Naive thymus-derived CD4-positive, alpha-beta T cell (primary cell): ENCODE measurements at regions of chr2 and their contacts with region 1.

Region 1: GRCh38 chr2:10122386-10123280 is at the start of gene RRM2:
- DNase-seq: peak; percentile 74 to 94 (median 84)
- ATAC-seq: peak; percentile 82
- H3K4me3 ChIP-seq: peak within 1 kb of the TSS; percentile 55
- H3K4me3 Mint-ChIP-seq: peak within 1 kb of the TSS; percentile 80 to 99 (median 98)
- H3K27ac ChIP-seq: peak within 1 kb of the TSS; percentile 34
- H3K27ac Mint-ChIP-seq: peak within 1 kb of the TSS in 6 of 9 donors; percentile 17 to 99 (median 69)
- H3K4me1 ChIP-seq: peaks cover 24 to 29% of the 10 kb centered on the region in 2 donors
- H3K4me1 Mint-ChIP-seq: peaks cover 21 to 76% (median 41%) of the 10 kb centered on the region in 7 donors
- H3K27me3 ChIP-seq: peaks cover 0 to 7% of the 10 kb centered on the region in 2 donors
- H3K27me3 Mint-ChIP-seq: peaks cover 0 to 24% (median 10%) of the 10 kb centered on the region in 5 donors
- total RNA-seq, gene RRM2: 0.13 to 330 (median 0.51) TPM

Region 2: DNA sequence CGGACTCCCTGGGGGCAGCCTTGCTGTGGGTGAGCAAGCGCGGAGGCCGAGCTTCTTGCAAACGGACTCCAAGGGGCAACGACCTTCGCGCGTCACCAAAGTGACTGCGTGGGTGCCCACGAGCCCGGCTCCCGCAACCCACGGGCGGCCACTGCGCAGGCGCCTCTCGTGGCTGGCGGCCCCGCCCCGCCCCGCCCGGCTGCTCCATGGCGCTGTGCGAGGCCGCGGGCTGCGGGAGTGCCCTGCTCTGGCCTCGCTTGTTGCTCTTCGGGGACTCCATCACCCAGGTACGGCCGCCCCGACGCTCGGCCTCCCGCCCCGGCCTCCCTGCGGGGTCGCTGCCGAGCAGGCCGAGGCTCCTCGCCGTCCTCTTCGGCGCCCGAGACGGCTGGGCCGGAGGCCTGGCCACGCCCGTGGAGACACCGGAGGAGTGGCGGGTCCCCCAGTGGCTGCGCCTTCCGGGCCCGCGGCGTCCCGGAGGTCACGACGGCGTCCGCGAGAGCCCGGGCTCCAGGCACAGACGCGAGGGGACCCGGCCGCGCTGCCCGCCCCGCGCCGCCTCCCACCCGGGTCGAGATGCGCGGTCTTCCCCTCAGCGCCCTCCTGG is 648.2 kb before region 1 on chr2 and contains the start of gene IAH1:
- CTCF ChIA-PET with region 1: no interaction called
- POLR2A ChIA-PET with region 1: no interaction called
- intact Hi-C with region 1: loop called in 1 of 2 experiments (anchors 5 kb)
- DNase-seq: peak in 8 of 9 donors; percentile 66 to 81 (median 78)
- ATAC-seq: peak; percentile 89
- H3K4me3 ChIP-seq: peak within 1 kb of the TSS; percentile 82
- H3K4me3 Mint-ChIP-seq: peak within 1 kb of the TSS; percentile 81 to 89 (median 84)
- H3K27ac ChIP-seq: peak within 1 kb of the TSS; percentile 95
- H3K27ac Mint-ChIP-seq: peak within 1 kb of the TSS; percentile 83 to 95 (median 88)
- H3K4me1 ChIP-seq: peaks cover 11 to 21% of the 10 kb centered on the region in 2 donors
- H3K4me1 Mint-ChIP-seq: peaks cover 20 to 53% (median 45%) of the 10 kb centered on the region in 7 donors
- H3K27me3 ChIP-seq: no peaks in the 10 kb centered on the region
- H3K27me3 Mint-ChIP-seq: no peaks in the 10 kb centered on the region
- total RNA-seq, gene IAH1: 43.9 to 62.7 (median 49.7) TPM

Region 3: DNA sequence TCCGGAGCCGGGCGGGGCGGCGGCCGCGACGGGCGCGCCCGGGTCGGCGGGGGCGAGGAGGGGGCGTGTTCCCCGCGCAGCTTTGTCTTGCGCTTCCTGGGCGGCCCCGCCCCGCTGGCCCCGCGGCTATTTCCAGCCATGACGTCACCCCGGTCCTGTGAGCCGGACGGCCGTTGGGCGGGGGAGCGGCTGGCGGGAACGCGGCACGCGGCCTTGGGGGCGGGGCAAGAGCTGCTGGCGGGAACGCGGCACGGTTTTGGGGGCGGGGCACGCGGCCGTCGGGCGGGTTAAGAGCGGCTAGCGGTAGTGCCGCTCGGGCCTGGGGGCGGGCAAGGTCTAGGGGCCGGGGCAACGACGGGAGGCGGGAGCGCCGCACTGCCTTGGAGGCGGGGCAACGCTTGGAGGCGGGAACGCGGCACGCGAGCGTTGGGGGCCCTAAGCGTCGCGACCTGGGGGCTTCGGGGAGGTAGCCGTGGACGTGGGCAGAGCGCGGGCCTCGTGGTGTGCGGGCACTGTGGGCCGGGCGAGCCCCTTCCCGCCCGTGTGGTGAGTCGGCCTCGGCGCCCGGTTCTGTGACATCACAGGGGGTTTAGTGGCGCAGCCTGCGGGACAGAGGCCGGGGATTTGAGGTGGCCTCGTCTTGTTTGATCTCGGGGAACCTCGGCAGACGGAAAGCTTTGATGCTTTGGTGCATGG is 78.6 kb before region 1 on chr2:
- CTCF ChIA-PET with region 1: no interaction called
- POLR2A ChIA-PET with region 1: no interaction called
- intact Hi-C with region 1: loop called (anchors 1 kb)
- DNase-seq: peak; percentile 79 to 93 (median 89)
- ATAC-seq: peak; percentile 73
- H3K4me3 ChIP-seq: peak overlapping the region; percentile 48
- H3K4me3 Mint-ChIP-seq: peak overlapping the region; percentile 76 to 89 (median 84)
- H3K27ac ChIP-seq: peak overlapping the region; percentile 76
- H3K27ac Mint-ChIP-seq: peak overlapping the region; percentile 82 to 95 (median 88)
- H3K4me1 ChIP-seq: peaks cover 6% of the 10 kb centered on the region in 2 donors
- H3K4me1 Mint-ChIP-seq: peaks cover 14 to 35% (median 29%) of the 10 kb centered on the region in 7 donors
- H3K27me3 ChIP-seq: no peaks in the 10 kb centered on the region
- H3K27me3 Mint-ChIP-seq: peaks cover 0 to 31% (median 0%) of the 10 kb centered on the region in 5 donors

Region 4: DNA sequence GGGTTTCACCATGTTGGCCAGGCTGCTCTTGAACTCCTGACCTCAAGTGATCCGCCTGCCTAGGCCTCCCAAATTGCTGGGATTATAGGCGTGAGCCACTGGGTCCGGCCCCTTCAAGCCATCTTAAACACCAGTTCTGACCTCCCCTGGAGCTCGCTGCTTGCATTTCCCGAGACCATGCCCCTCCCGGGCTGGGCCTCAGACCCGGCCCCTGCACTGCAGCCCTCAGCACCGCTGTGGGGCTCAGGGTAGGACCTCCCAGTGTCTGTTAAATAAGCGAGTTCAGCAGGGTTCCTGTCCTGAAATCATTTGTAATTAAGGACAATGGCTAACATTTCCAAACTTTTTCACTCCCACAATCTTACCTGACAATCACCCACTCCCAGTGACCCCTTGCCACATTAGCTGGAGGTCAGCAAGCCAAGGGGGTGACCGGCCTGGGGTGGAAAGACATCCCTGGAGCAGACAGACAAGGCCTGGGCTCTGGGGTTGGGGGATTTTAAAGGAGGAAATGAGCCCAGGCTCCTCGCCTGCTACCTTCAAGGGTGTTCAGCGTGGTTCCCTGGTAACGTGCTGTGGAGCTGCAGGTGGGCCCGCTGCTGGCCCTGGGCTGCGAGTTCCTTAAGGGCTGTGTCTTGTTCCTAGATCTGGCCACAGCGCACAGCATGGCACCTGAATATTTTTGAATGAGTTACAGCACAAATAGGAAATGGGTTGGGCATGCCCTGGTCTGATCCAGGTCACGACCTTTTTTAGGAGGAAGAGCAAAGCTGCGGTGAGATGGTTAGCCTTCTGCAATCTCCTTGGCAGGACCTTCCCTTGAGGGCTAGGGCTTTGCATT is 57.5 kb before region 1 on chr2:
- CTCF ChIA-PET with region 1: no interaction called
- POLR2A ChIA-PET with region 1: no interaction called
- intact Hi-C with region 1: no loop called
- DNase-seq: no peak
- ATAC-seq: peak; percentile 45
- H3K4me3 ChIP-seq: no peak overlapping the region
- H3K4me3 Mint-ChIP-seq: peak overlapping the region in 1 of 10 donors; percentile 28
- H3K27ac ChIP-seq: no peak overlapping the region
- H3K27ac Mint-ChIP-seq: no peak overlapping the region
- H3K4me1 ChIP-seq: no peaks in the 10 kb centered on the region
- H3K4me1 Mint-ChIP-seq: peaks cover 0 to 5% (median 0%) of the 10 kb centered on the region in 7 donors
- H3K27me3 ChIP-seq: no peaks in the 10 kb centered on the region
- H3K27me3 Mint-ChIP-seq: peaks cover 0 to 4% (median 0%) of the 10 kb centered on the region in 5 donors

Region 5: GRCh38 chr2:10141736-10142642 is 19.4 kb after region 1 on chr2:
- CTCF ChIA-PET with region 1: interaction called, 3 read pairs
- POLR2A ChIA-PET with region 1: no interaction called
- intact Hi-C with region 1: loop called in 1 of 2 experiments (anchors 1 kb)
- DNase-seq: peak in 6 of 9 donors; percentile 32 to 63 (median 55)
- ATAC-seq: peak; percentile 64
- H3K4me3 ChIP-seq: no peak overlapping the region
- H3K4me3 Mint-ChIP-seq: peak overlapping the region in 9 of 10 donors; percentile 52 to 80 (median 73)
- H3K27ac ChIP-seq: no peak overlapping the region
- H3K27ac Mint-ChIP-seq: peak overlapping the region in 7 of 9 donors; percentile 56 to 84 (median 71)
- H3K4me1 ChIP-seq: peaks cover 0 to 18% of the 10 kb centered on the region in 2 donors
- H3K4me1 Mint-ChIP-seq: peaks cover 17 to 43% (median 31%) of the 10 kb centered on the region in 7 donors
- H3K27me3 ChIP-seq: no peaks in the 10 kb centered on the region
- H3K27me3 Mint-ChIP-seq: no peaks in the 10 kb centered on the region

Region 6: DNA sequence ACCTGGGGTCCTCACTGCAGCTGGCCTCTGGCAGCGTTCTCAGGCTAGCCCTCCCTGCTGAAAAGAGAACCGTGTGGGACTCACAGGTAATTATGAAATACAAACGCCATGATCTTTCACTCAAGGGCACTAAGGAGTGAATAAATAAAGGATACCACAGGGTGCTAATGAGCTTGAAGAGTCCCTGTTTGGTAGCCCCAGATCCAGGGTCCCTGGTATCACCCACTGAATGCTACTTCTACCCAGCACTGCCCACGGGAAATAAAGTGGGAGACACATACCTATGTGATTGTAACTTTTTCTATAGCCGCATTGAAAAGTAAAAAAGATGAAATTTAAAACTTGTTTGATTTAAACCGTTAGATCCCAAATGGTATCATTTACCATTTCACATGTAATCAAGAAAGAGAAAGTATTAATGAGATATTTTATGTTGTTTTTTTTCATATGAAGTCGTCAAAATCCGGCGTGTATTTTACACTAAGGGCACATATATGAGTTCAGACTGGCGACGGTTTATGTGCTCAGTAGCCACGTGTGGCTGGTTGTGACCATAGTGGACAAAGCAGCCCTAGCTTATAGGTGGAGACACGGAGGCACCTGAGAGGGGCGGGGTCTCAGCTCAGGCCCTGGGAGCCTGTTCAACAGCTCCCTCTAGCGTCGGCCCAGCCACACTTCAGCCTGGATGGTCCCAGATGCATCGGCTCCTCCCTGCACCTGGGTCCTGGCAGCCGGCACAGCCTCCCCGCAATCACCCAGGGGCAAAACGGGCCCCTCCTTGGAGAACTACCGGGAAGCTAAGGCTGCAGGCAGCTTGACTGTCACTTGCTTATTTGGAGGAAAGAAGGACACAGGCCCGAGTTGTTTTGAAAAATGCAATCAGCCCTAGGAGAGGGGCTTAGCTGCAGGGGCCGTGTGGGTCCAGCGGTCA is 286.3 kb after region 1 on chr2:
- CTCF ChIA-PET with region 1: interaction called, 50 read pairs
- POLR2A ChIA-PET with region 1: interaction called, 3 read pairs
- intact Hi-C with region 1: loop called (anchors 1 kb)
- DNase-seq: peak; percentile 65 to 85 (median 80)
- ATAC-seq: peak; percentile 91
- H3K4me3 ChIP-seq: peak overlapping the region; percentile 35
- H3K4me3 Mint-ChIP-seq: peak overlapping the region; percentile 64 to 89 (median 78)
- H3K27ac ChIP-seq: peak overlapping the region; percentile 33
- H3K27ac Mint-ChIP-seq: peak overlapping the region; percentile 66 to 96 (median 86)
- H3K4me1 ChIP-seq: peaks cover 29 to 39% of the 10 kb centered on the region in 2 donors
- H3K4me1 Mint-ChIP-seq: peaks cover 29 to 52% (median 41%) of the 10 kb centered on the region in 7 donors
- H3K27me3 ChIP-seq: no peaks in the 10 kb centered on the region
- H3K27me3 Mint-ChIP-seq: no peaks in the 10 kb centered on the region

Region 7: DNA sequence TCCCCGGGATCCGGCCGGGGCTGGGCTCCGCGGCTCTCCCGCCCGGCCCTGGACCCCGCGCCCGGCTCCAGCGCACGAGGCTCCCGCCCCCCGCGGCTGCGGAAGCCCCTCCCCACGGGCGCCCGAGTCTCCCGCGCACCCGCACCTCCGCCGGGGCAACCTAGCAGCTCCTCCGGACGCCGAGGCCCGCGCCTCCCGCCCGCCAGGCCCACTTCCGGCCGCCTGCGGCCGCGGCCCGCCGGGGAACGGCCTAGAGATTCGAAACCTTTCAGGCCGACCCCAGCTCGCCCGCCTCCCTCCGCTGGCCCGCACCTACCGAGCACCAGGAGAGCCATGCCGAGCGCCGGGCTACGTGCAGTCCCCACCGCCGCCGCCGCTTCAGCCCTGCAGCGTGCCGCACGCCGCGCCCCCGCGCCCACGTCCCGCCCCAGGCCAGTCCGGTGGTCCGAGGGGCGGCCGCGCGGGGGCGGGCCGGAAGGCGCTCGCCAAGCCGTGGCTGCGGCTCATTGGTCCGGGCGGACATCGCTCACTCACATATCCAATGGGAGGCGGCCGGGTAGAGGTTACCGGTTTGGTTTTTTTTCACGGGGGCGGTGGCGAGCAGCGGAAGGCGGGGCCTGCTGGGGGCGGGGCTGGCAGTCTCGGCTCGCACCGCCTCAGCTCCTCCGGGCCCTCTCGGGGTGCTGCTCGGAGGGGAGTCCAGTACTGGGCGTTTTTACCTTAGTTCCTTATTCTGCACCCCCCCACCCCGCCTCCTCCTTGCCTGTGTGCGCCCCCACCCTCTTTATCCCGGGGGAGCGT is 689.9 kb after region 1 on chr2 and contains the start of gene PDIA6:
- CTCF ChIA-PET with region 1: no interaction called
- POLR2A ChIA-PET with region 1: no interaction called
- intact Hi-C with region 1: loop called in 1 of 2 experiments (anchors 5 kb)
- DNase-seq: peak; percentile 87 to 96 (median 90)
- ATAC-seq: peak; percentile 95
- H3K4me3 ChIP-seq: peak within 1 kb of the TSS; percentile 73
- H3K4me3 Mint-ChIP-seq: peak within 1 kb of the TSS; percentile 87 to 95 (median 91)
- H3K27ac ChIP-seq: peak within 1 kb of the TSS; percentile 86
- H3K27ac Mint-ChIP-seq: peak within 1 kb of the TSS; percentile 77 to 96 (median 84)
- H3K4me1 ChIP-seq: peaks cover 14 to 15% of the 10 kb centered on the region in 2 donors
- H3K4me1 Mint-ChIP-seq: peaks cover 28 to 44% (median 39%) of the 10 kb centered on the region in 7 donors
- H3K27me3 ChIP-seq: no peaks in the 10 kb centered on the region
- H3K27me3 Mint-ChIP-seq: peaks cover 0 to 15% (median 0%) of the 10 kb centered on the region in 5 donors
- total RNA-seq, gene PDIA6: 24.3 to 173 (median 46.8) TPM